ENCODE measurements at regions of chr15 and their contacts with region 1.

Region 1: GRCh38 chr15:99565299-99566156 is at the start of gene MEF2A:
- DNase-seq: peak; percentile 89
- H3K4me3 Mint-ChIP-seq: peak within 1 kb of the TSS; percentile 98
- H3K27ac Mint-ChIP-seq: peak within 1 kb of the TSS; percentile 95
- H3K4me1 Mint-ChIP-seq: peaks cover 36% of the 10 kb centered on the region
- H3K27me3 Mint-ChIP-seq: peaks cover 4% of the 10 kb centered on the region
- total RNA-seq, gene MEF2A: 27.4 and 30.2 TPM in 2 replicates

Region 2: GRCh38 chr15:99275525-99276128 is 289.9 kb before region 1 on chr15:
- intact Hi-C with region 1: loop called (anchors 5 kb)
- DNase-seq: no peak
- H3K4me3 Mint-ChIP-seq: no peak overlapping the region
- H3K27ac Mint-ChIP-seq: no peak overlapping the region
- H3K4me1 Mint-ChIP-seq: peaks cover 34% of the 10 kb centered on the region
- H3K27me3 Mint-ChIP-seq: no peaks in the 10 kb centered on the region

Region 3: DNA sequence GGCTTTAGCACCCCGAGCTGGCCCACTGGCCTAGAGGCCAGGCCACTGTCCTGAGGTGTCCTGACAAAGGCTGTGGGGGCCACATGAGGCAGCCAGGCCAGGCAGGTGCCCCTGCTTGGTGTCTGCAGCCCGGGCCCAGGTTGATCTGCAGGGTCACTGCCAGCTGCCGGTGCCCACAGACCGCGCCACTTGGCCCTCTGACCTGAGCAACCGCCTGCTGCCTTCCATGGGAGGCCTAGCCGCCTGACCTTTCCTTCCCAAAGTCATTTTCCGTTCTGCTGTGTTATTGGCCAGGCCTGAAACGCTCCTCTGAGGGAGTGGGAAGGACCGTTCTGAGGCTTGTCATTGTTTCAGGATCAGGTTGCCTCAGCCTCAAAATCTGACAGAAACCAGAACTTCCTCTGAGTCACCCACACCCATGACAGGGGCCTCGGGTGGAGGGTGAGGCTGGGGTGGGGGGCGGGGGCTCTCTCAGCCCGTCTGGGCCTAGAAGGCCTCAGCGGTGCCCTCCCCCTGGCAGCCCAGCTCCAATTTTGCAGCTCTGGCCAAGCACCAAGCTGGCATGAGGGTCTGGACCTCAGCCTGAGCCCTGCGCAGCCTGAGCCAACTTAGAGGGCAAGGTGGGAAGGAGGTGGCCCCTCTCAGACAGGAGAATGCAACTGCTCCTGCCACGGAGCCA is 140.4 kb before region 1 on chr15:
- intact Hi-C with region 1: loop called (anchors 2 kb)
- DNase-seq: peak; percentile 49
- H3K4me3 Mint-ChIP-seq: peak overlapping the region; percentile 68
- H3K27ac Mint-ChIP-seq: peak overlapping the region; percentile 92
- H3K4me1 Mint-ChIP-seq: peaks cover 63% of the 10 kb centered on the region
- H3K27me3 Mint-ChIP-seq: no peaks in the 10 kb centered on the region

Region 4: GRCh38 chr15:99504823-99505551 is 60.5 kb before region 1 on chr15:
- intact Hi-C with region 1: loop called (anchors 1 kb)
- DNase-seq: no peak
- H3K4me3 Mint-ChIP-seq: no peak overlapping the region
- H3K27ac Mint-ChIP-seq: peak overlapping the region; percentile 73
- H3K4me1 Mint-ChIP-seq: peaks cover 60% of the 10 kb centered on the region
- H3K27me3 Mint-ChIP-seq: no peaks in the 10 kb centered on the region

Region 5: GRCh38 chr15:99545605-99546004 is 19.9 kb before region 1 on chr15:
- intact Hi-C with region 1: no loop called
- DNase-seq: no peak
- H3K4me3 Mint-ChIP-seq: no peak overlapping the region
- H3K27ac Mint-ChIP-seq: no peak overlapping the region
- H3K4me1 Mint-ChIP-seq: peaks cover 8% of the 10 kb centered on the region
- H3K27me3 Mint-ChIP-seq: peaks cover 7% of the 10 kb centered on the region

Region 6: DNA sequence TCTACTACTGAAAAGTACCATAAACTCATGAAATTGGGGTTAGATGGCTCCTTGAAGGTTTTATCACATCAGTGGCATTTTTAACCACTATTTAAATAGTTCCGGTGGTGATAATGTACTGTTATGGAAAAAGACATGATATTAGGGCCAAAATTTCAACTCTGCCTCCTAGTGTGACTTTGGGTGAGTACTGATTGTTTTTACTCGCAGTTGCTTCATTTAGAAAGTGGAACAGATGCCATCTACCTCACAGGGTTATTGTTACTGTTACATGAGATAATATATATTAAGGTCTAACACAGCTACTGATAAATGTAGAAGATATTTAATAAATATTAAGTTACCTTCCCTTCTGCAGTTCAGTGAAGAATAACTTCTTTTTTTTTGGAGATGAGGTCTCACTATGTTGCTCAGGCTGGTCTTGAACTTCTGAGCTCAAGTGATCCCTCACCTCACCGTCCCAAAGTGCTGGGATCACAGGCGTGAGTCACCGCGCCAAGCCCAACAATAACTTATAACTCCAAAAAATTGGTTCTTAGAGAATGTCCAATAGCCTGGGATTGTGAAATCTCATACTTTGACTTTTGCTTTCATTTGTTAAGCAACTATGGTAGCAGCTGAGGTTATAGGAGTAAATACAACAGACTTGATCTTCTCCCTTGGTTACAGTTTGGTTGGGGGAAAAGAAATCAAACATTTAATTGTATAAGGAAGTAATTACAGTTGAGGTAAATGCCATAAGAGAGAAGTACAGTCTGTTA is 48.5 kb after region 1 on chr15:
- intact Hi-C with region 1: loop called (anchors 5 kb)
- DNase-seq: no peak
- H3K4me3 Mint-ChIP-seq: no peak overlapping the region
- H3K27ac Mint-ChIP-seq: no peak overlapping the region
- H3K4me1 Mint-ChIP-seq: peaks cover 29% of the 10 kb centered on the region
- H3K27me3 Mint-ChIP-seq: no peaks in the 10 kb centered on the region

Measured in activated T-helper 1 cell treated with anti-CD3 and anti-CD28 coated beads, Interleukin-12 subunit alpha, Interleukin-12 subunit beta, Interleukin-2, Interleukin-4 antibody, amounts not matched to agents 30 ng/mL and 10 ng/mL and 1 ng/mL, durations not matched to agents 14 hours and 24 hours and 36 hours (primary cell).